BJ (cell line): ENCODE measurements at regions of chr1 and their contacts with region 1.

Region 1: GRCh38 chr1:1033009-1033587 is 13.2 kb downstream of the AGRN start:
- DNase-seq: no peak
- H3K4me3 ChIP-seq: peak overlapping the region; percentile 30
- H3K27me3 ChIP-seq: no peaks in the 10 kb centered on the region
- CTCF ChIP-seq: peak; percentile 81

Region 2: GRCh38 chr1:941588-942383 is 91.3 kb before region 1 on chr1:
- CTCF ChIA-PET with region 1: no interaction called
- POLR2A ChIA-PET with region 1: no interaction called
- DNase-seq: no peak
- H3K4me3 ChIP-seq: peak overlapping the region; percentile 36
- H3K27me3 ChIP-seq: no peaks in the 10 kb centered on the region
- CTCF ChIP-seq: no peak

Region 3: DNA sequence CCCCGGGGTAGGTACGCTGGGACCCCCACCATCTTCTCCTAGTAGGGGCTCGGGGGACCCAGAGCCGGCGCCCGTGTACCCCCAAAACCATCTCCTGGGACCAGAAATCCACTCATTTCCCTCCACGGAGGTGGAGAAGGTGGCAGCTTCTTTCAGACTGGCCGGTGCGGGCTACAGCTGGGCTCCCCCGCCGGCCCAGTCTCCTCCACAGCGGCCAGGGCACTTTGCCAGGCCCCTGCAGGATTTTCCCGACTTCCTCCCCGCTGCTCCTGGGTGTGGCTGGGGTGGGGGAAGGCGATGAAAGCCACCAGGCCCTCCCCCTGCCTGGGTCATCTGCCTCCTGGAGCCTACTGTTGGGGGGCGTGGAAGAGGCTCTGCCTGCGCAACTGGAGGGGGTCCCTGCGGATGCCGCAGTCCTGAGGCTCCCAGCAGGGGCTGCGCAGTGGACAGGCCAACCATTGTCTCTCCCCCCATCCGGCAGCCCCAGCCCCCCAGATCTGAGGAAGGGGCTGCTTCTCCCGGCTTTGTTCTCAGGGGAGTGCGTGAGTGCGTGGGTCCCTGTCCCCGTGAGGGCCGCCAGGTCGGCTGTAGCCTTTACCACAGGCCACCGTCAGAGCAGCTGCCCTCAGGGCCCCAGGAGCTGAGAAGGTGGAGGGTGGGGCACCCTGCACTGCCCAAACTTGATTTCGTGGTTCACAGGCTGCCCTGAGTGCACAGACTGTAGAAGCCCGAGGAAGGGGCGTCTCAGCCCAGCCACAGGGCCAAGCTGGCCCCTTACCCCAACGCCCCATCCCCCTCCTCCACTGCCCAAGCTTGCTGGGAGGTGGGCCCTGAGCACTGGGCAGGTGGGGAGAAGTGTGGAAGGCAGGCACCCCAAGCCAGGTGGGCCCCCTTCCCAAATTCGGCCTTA is 11.8 kb before region 1 on chr1:
- CTCF ChIA-PET with region 1: interaction called, 20 read pairs
- POLR2A ChIA-PET with region 1: no interaction called
- DNase-seq: no peak
- H3K4me3 ChIP-seq: peak overlapping the region; percentile 78
- H3K27me3 ChIP-seq: no peaks in the 10 kb centered on the region
- CTCF ChIP-seq: no peak

Region 4: DNA sequence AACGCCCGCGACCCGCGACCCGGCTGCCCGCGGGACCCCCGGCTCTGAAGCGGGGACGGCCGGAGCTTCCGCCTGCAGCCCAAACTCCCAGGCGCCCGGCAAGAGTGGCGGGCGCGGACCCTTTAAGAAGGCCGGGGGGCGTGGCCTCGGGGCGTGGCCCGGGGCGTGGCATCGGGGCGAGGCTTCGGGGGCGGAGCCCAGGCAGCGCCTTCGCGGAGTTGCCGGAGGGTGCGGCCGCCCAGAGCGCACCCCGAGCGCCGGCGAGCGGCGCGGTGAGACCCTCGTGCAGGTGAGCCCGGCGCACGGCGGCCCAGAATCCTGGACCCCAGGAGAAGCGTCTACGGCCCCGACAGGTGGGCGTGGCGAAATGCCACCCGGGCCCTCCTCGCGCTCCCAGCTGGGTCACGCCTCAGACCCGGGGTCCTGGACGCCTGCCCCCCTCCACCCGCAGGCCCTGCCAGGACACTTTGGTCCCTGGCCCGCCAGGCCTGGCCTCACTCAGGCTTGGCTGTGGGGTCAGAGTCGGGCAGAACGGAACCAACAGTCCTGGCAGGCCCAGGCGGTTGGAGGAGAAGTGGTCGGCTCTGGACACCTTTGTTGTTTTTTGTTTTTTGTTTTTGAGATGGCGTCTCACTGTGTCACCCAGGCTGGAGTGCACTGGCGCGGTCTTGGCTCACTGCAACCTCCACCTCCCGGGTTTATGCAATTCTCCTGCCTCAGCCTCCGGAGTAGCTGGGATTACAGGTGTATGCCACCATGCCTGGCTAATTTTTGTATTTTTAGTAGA is 26.6 kb after region 1 on chr1:
- CTCF ChIA-PET with region 1: interaction called, 17 read pairs
- POLR2A ChIA-PET with region 1: no interaction called
- DNase-seq: no peak
- H3K4me3 ChIP-seq: peak overlapping the region; percentile 49
- H3K27me3 ChIP-seq: no peaks in the 10 kb centered on the region; the same call in 1 of the 2 replicates
- CTCF ChIP-seq: no peak